Naive thymus-derived CD8-positive, alpha-beta T cell (primary cell): ENCODE measurements at regions of chr7 and their contacts with region 1.

Region 1: GRCh38 chr7:44999245-45000095 is 531 bp upstream of the CCM2 start:
- DNase-seq: peak; percentile 96 to 100 (median 98)
- ATAC-seq: peak; percentile 82 to 83
- H3K4me3 Mint-ChIP-seq: peak overlapping the region; percentile 84 to 98 (median 97)
- H3K27ac Mint-ChIP-seq: peak overlapping the region; percentile 91 to 99 (median 97)
- H3K4me1 Mint-ChIP-seq: peaks cover 21 to 66% (median 50%) of the 10 kb centered on the region in 4 donors
- H3K27me3 Mint-ChIP-seq: no peaks in the 10 kb centered on the region

Region 2: GRCh38 chr7:44559485-44559884 is 440.0 kb before region 1 on chr7:
- POLR2A ChIA-PET with region 1: no interaction called
- DNase-seq: no peak
- ATAC-seq: no peak
- H3K4me3 Mint-ChIP-seq: no peak overlapping the region
- H3K27ac Mint-ChIP-seq: peak overlapping the region in 8 of 10 donors; percentile 15 to 86 (median 43)
- H3K4me1 Mint-ChIP-seq: peaks cover 0 to 7% (median under 1%) of the 10 kb centered on the region in 4 donors
- H3K27me3 Mint-ChIP-seq: no peaks in the 10 kb centered on the region

Region 3: GRCh38 chr7:44973610-44974401 is 25.7 kb before region 1 on chr7:
- POLR2A ChIA-PET with region 1: interaction called, 81 read pairs
- DNase-seq: peak in 9 of 10 donors; percentile 43 to 80 (median 48)
- ATAC-seq: peak; percentile 26 to 28
- H3K4me3 Mint-ChIP-seq: peak overlapping the region in 1 of 10 donors; percentile 29
- H3K27ac Mint-ChIP-seq: peak overlapping the region in 9 of 10 donors; percentile 47 to 88 (median 77)
- H3K4me1 Mint-ChIP-seq: peaks cover 17 to 61% (median 49%) of the 10 kb centered on the region in 4 donors
- H3K27me3 Mint-ChIP-seq: no peaks in the 10 kb centered on the region

Region 4: GRCh38 chr7:44980393-44981034 is 19.0 kb before region 1 on chr7:
- POLR2A ChIA-PET with region 1: interaction called, 81 read pairs
- DNase-seq: peak in 9 of 10 donors; percentile 21 to 71 (median 53)
- ATAC-seq: peak; percentile 29 to 39
- H3K4me3 Mint-ChIP-seq: peak overlapping the region; percentile 32 to 99 (median 94)
- H3K27ac Mint-ChIP-seq: peak overlapping the region; percentile 78 to 98 (median 94)
- H3K4me1 Mint-ChIP-seq: peaks cover 35 to 88% (median 82%) of the 10 kb centered on the region in 4 donors
- H3K27me3 Mint-ChIP-seq: no peaks in the 10 kb centered on the region

Region 5: GRCh38 chr7:44986218-44987053 is 13.0 kb before region 1 on chr7:
- POLR2A ChIA-PET with region 1: interaction called, 33 read pairs
- DNase-seq: peak; percentile 90 to 97 (median 94)
- ATAC-seq: peak; percentile 93 to 95
- H3K4me3 Mint-ChIP-seq: peak overlapping the region; percentile 93 to 99 (median 98)
- H3K27ac Mint-ChIP-seq: peak overlapping the region; percentile 95 to 100 (median 99)
- H3K4me1 Mint-ChIP-seq: peaks cover 27 to 61% (median 54%) of the 10 kb centered on the region in 4 donors
- H3K27me3 Mint-ChIP-seq: no peaks in the 10 kb centered on the region

Region 6: GRCh38 chr7:45013465-45013967 is 14.0 kb after region 1 on chr7:
- POLR2A ChIA-PET with region 1: interaction called, 16 read pairs
- DNase-seq: peak in 4 of 10 donors; percentile 22 to 67 (median 46)
- ATAC-seq: peak; percentile 65 to 89
- H3K4me3 Mint-ChIP-seq: peak overlapping the region in 7 of 10 donors; percentile 0 to 31 (median 9)
- H3K27ac Mint-ChIP-seq: peak overlapping the region in 9 of 10 donors; percentile 49 to 93 (median 86)
- H3K4me1 Mint-ChIP-seq: peaks cover 26 to 37% (median 32%) of the 10 kb centered on the region in 4 donors
- H3K27me3 Mint-ChIP-seq: no peaks in the 10 kb centered on the region

Region 7: GRCh38 chr7:45026984-45027773 is 27.7 kb after region 1 on chr7:
- POLR2A ChIA-PET with region 1: interaction called, 314 read pairs
- DNase-seq: peak in 9 of 10 donors; percentile 12 to 78 (median 44)
- ATAC-seq: peak; percentile 64 to 66
- H3K4me3 Mint-ChIP-seq: peak overlapping the region; percentile 88 to 97 (median 93)
- H3K27ac Mint-ChIP-seq: peak overlapping the region; percentile 89 to 99 (median 92)
- H3K4me1 Mint-ChIP-seq: peaks cover 21 to 72% (median 60%) of the 10 kb centered on the region in 4 donors
- H3K27me3 Mint-ChIP-seq: no peaks in the 10 kb centered on the region